ENCODE measurements at regions of chr6 and their contacts with region 1.

Region 1: DNA sequence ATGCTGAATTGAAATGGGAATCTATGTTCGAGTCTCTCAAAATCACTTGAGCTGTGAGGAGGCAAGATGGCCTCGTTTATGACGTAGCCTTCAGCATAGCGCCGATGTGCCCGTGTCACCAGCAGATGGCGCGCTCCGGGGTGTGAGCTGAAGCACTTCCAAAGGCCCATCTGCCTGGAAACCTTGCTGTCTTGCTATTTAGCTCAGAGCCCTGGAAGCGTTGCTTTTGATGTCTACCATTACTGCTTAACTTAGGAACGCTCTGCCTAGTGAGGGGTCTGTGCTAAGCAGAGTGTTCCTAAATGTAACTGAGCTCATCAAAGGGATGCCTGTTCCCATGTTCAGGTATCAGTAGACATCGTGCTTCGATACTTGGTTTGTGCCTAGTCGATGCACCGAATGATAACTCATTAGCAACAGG is 67.7 kb downstream of the SYCP2L start:
- DNase-seq: peak; percentile 55 to 77
- ATAC-seq: no peak
- H3K4me3 ChIP-seq: no peak overlapping the region
- H3K27ac ChIP-seq: no peak overlapping the region
- H3K4me1 ChIP-seq: no peaks in the 10 kb centered on the region
- H3K27me3 ChIP-seq: no peaks in the 10 kb centered on the region
- CTCF ChIP-seq: peak; percentile 43

Region 2: GRCh38 chr6:10901770-10902169 is 52.8 kb before region 1 on chr6:
- intact Hi-C with region 1: no loop called
- DNase-seq: no peak
- ATAC-seq: no peak
- H3K4me3 ChIP-seq: no peak overlapping the region
- H3K27ac ChIP-seq: no peak overlapping the region
- H3K4me1 ChIP-seq: no peaks in the 10 kb centered on the region
- H3K27me3 ChIP-seq: no peaks in the 10 kb centered on the region
- CTCF ChIP-seq: no peak

Region 3: GRCh38 chr6:11044712-11045167 is 90.1 kb after region 1 on chr6:
- intact Hi-C with region 1: loop called in 1 of 2 experiments (anchors 5 kb)
- DNase-seq: no peak
- ATAC-seq: no peak
- H3K4me3 ChIP-seq: peak overlapping the region; percentile 56
- H3K27ac ChIP-seq: no peak overlapping the region
- H3K4me1 ChIP-seq: no peaks in the 10 kb centered on the region
- H3K27me3 ChIP-seq: peaks cover 13 to 80% (median 15%) of the 10 kb centered on the region in 3 donors
- CTCF ChIP-seq: no peak

Region 4: GRCh38 chr6:11064836-11065235 is 110.2 kb after region 1 on chr6:
- intact Hi-C with region 1: loop called (anchors 2 to 10 kb)
- DNase-seq: no peak
- ATAC-seq: no peak
- H3K4me3 ChIP-seq: no peak overlapping the region
- H3K27ac ChIP-seq: no peak overlapping the region
- H3K4me1 ChIP-seq: no peaks in the 10 kb centered on the region
- H3K27me3 ChIP-seq: no peaks in the 10 kb centered on the region
- CTCF ChIP-seq: no peak